BJ (cell line): ENCODE measurements at regions of chr3 and their contacts with region 1.

Region 1: DNA sequence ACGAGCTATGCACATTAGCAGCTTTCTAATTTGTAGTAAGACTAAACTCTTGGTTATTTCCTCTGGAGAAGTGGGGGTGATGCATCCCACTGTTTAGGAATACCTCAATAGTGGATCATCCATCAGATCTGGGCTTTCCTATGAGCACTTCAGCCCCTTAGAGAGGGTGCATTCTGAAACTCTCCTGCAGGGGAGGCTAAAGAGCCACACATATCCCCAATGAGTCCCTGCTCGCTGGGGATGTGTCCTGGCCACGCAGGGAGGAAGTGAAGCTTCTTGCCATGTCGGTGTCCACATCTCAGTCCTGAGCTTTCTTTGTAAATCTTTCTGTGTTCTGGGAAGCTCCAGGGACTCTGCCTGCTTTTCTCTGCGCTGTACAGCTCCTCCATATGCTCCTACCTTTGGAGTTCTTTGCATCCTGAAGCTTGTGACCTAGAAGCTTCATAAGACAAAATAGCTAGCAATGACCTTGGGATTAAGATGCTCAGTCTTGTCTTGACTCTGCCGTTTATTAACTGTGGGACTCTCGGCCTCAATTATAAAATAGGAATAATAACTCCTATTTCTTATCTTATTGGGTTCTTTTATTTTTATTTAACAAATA is 28.3 kb upstream of the MASP1 start:
- DNase-seq: peak; percentile 42
- H3K4me3 ChIP-seq: no peak overlapping the region
- H3K27me3 ChIP-seq: no peaks in the 10 kb centered on the region
- CTCF ChIP-seq: peak; percentile 96

Region 2: GRCh38 chr3:187227658-187228258 is 92.0 kb before region 1 on chr3:
- CTCF ChIA-PET with region 1: interaction called, 216 read pairs
- POLR2A ChIA-PET with region 1: no interaction called
- DNase-seq: peak; percentile 58
- H3K4me3 ChIP-seq: no peak overlapping the region
- H3K27me3 ChIP-seq: no peaks in the 10 kb centered on the region
- CTCF ChIP-seq: no peak

Region 3: DNA sequence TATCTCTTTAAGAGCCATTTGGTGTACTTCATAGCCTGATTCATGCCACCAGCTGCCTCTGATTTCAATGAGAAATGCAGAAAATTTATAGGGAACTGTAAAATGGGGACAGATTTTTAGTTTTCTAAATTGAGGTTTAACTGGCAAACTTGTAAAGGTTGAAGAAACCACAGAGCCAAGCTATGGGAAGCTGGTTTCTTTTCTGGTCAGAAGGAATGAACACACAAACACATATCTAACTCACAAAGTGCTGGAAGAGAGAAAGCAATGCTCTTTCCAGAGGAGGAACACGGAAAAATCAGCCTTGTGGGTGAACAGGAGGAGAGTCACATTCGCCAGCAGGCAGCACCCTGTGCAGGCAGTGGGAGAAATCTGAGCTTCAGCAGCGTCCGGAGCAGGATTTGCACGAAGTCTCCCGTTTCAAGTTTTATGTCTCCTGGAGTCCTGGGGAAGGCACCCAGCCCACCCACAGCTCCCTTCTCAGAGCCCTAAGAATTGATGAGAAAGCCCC is 28.7 kb before region 1 on chr3:
- CTCF ChIA-PET with region 1: interaction called, 17 read pairs
- POLR2A ChIA-PET with region 1: no interaction called
- DNase-seq: peak; percentile 74
- H3K4me3 ChIP-seq: peak overlapping the region; percentile 83
- H3K27me3 ChIP-seq: no peaks in the 10 kb centered on the region
- CTCF ChIP-seq: no peak

Region 4: DNA sequence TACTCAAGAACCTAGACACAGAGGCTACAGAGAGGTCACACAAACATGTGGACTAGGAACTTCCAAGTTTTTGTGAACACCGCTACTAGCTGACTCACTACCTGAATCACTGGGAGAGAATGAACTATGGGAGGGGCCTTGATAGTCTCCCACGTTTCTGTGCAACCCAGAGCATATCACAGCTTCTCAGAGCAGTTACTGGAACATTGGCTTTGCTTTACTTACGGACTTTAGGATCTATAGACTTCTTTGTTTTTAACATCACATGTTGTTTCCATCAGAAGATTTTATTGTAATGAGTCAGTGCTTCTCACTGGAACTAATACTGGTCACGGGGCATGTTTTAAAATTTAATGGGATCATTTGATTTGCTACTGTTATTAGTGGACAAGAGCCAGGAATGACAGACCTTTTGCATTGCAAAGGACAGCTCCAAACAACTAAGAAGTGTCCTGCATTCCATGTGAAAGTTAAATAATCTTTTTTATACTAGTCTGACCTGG is 84.0 kb after region 1 on chr3:
- CTCF ChIA-PET with region 1: interaction called, 25 read pairs
- POLR2A ChIA-PET with region 1: no interaction called
- DNase-seq: peak; percentile 99
- H3K4me3 ChIP-seq: no peak overlapping the region
- H3K27me3 ChIP-seq: no peaks in the 10 kb centered on the region
- CTCF ChIP-seq: no peak

Region 5: GRCh38 chr3:187616307-187616972 is 296.6 kb after region 1 on chr3:
- CTCF ChIA-PET with region 1: interaction called, 170 read pairs
- POLR2A ChIA-PET with region 1: no interaction called
- DNase-seq: no peak
- H3K4me3 ChIP-seq: no peak overlapping the region
- H3K27me3 ChIP-seq: no peaks in the 10 kb centered on the region
- CTCF ChIP-seq: peak; percentile 81

Region 6: GRCh38 chr3:187679638-187680396 is 360.0 kb after region 1 on chr3:
- CTCF ChIA-PET with region 1: interaction called, 543 read pairs
- POLR2A ChIA-PET with region 1: interaction called, 8 read pairs
- DNase-seq: no peak
- H3K4me3 ChIP-seq: no peak overlapping the region
- H3K27me3 ChIP-seq: no peaks in the 10 kb centered on the region; the same call in 1 of the 2 replicates
- CTCF ChIP-seq: peak; percentile 93

Region 7: DNA sequence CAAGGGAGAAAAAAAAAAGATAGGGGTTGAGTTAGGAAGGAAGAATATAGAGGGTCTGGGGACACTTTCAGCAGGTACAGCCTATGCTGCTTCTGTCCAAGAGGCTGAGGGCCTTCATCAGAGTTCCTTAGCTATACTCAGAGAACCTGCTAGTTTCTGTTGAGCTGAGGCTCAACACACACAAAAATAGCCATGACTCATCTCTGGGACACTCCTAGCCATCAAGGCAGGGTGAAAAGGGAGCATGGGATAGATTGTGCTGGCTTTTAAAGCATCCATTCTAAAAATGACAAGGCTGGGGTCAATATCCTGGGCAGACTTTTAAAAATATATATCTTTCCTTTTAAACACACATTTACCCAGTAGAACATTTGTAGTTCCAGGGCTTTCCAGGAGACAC is 385.4 kb after region 1 on chr3:
- CTCF ChIA-PET with region 1: interaction called, 14 read pairs
- POLR2A ChIA-PET with region 1: no interaction called
- DNase-seq: no peak
- H3K4me3 ChIP-seq: no peak overlapping the region
- H3K27me3 ChIP-seq: peaks cover 1% of the 10 kb centered on the region
- CTCF ChIP-seq: no peak